Pancreas (tissue), 10 donors: ENCODE measurements at regions of chr15 and their contacts with region 1.

Region 1: GRCh38 chr15:74781431-74782258 is at the start of gene CSK:
- DNase-seq: peak; percentile 57 to 91 (median 82)
- ATAC-seq: peak; percentile 78 to 88 (median 82)
- H3K4me3 ChIP-seq: peak within 1 kb of the TSS; percentile 53 to 79 (median 70)
- H3K27ac ChIP-seq: peak within 1 kb of the TSS in 3 of 4 donors; percentile 44 to 54 (median 46)
- H3K4me1 ChIP-seq: peaks cover 0 to 20% (median 3%) of the 10 kb centered on the region in 3 donors
- H3K27me3 ChIP-seq: no peaks in the 10 kb centered on the region
- CTCF ChIP-seq: peak; percentile 24 to 56 (median 40)
- total RNA-seq, gene CSK: 8.5 to 35.1 (median 14.1) TPM

Region 2: GRCh38 chr15:74573987-74574386 is 207.7 kb before region 1 on chr15:
- intact Hi-C with region 1: no loop called
- DNase-seq: no peak
- ATAC-seq: no peak
- H3K4me3 ChIP-seq: no peak overlapping the region
- H3K27ac ChIP-seq: no peak overlapping the region
- H3K4me1 ChIP-seq: no peaks in the 10 kb centered on the region
- H3K27me3 ChIP-seq: no peaks in the 10 kb centered on the region
- CTCF ChIP-seq: no peak

Region 3: DNA sequence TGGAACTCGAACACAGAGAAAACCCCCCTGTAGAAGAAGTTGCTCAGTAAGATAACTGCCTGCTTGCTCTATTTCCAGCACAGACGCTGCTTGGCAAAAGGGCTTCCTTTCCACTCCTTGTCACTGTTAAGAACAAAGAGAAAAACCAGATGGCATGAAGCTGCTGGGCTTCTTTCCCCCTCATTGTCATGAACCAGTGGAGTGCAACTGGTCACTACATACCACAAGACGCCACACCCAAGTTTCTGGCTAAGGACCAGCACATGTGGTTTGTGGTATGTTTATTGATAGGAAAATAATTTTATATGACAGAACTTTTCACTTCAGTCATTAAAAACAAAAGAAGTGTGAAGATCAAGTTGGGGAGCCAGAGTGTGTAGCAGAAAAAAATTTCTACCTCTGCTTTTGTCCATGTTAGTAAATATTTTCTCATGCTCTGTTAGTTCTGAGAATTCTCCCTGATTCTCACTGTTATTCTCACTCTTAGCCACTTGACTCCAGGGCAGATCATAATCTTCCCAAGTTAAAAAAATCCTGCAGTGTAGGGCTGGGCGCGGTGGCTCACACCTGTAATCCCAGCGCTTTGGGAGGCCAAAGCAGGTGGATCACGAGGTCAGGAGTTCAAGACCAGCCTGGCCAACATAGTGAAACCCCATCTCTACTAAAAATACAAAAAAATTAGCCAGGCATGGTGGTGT is 128.1 kb before region 1 on chr15:
- intact Hi-C with region 1: no loop called
- DNase-seq: no peak
- ATAC-seq: no peak
- H3K4me3 ChIP-seq: no peak overlapping the region
- H3K27ac ChIP-seq: no peak overlapping the region
- H3K4me1 ChIP-seq: peaks cover 4 to 22% (median 11%) of the 10 kb centered on the region in 3 donors
- H3K27me3 ChIP-seq: no peaks in the 10 kb centered on the region
- CTCF ChIP-seq: no peak

Region 4: DNA sequence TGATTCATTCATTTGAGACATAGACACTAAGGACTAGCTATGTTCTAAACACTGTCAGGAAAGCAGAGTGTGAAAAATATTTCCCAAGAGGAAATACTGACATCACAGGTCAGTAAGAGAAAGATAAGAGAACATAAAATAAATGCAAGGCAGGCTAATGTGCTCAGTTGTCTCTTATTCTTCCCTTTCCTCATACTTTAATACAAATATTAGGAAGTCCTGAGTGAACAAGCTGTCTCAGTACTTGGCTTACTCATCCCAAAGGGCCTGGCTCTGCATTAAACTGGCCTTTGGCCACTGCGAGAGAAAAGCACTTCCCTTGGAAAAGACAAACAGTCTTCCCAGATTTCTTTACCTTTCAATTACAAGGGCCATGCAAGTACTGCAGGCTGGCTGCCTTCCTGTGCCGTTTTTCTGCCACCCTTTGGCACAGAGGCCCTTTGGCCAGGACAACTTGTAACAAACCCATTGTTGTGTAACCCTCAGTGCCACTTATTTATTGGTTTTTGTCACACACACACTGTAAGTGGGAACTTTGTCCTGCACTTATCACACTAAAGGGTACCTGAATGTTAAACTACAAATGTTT is 117.5 kb before region 1 on chr15:
- intact Hi-C with region 1: no loop called
- DNase-seq: peak in 2 of 6 donors; percentile 31 to 35
- ATAC-seq: peak; percentile 63 to 83 (median 72)
- H3K4me3 ChIP-seq: no peak overlapping the region
- H3K27ac ChIP-seq: peak overlapping the region in 3 of 4 donors; percentile 17 to 63 (median 28)
- H3K4me1 ChIP-seq: peaks cover 16 to 30% (median 23%) of the 10 kb centered on the region in 3 donors
- H3K27me3 ChIP-seq: no peaks in the 10 kb centered on the region
- CTCF ChIP-seq: no peak

Region 5: DNA sequence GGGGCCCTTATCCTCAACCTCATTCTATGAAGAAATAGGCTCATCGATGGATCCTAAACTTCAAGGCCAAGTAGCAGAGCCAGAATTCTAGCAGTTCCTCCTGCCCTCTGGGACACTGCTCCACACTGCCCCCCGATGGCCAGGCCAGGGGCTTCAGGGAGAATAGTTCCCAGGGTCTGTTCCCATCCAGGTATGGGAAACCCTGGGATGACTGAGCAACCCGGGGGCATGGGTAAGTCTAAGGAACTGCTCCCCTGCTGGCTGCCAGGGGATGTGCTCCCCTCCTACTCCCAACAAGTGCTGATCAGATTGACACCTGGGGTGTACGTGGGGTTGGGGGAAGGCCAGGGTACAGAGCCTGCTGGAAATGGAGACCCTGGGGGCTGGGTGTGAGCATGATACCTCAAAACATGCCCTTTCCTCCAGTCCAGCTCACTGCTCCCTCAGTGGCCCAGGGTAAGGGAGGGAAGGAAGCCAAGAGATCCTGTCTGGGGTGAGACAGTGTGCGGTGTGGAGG is 53.7 kb after region 1 on chr15:
- intact Hi-C with region 1: loop called in 1 of 3 experiments (anchors 5 kb)
- DNase-seq: peak in 5 of 6 donors; percentile 39 to 86 (median 69)
- ATAC-seq: peak; percentile 61 to 93 (median 81)
- H3K4me3 ChIP-seq: no peak overlapping the region
- H3K27ac ChIP-seq: no peak overlapping the region
- H3K4me1 ChIP-seq: no peaks in the 10 kb centered on the region
- H3K27me3 ChIP-seq: no peaks in the 10 kb centered on the region
- CTCF ChIP-seq: peak; percentile 55 to 74 (median 60)